ENCODE measurements at regions of chr1 and their contacts with region 1.

Region 1: DNA sequence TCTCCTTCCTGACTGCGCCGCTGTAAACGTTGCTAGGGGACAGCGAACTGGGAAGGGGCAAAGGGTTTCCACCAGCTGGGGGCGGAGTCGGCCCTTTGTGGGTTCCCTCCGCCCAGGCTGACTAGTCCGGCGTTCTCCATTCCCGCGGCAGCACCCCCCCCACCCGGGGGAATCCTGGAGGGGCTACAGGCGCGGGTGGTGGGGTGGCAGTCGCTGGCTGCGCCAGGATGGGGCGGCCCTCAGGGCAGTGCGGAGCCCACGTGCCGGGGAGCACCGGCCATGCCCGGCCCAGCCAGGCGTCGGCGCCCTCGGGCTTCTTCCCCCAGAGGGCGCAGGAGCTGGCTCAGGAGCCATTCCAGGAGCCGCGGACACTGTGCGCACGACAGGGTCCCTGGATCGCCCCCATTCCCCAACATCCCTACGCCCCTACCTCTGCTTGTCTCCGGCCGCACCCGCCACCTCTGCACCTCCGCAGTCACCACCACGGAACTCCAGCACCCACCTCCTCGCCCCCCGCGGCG is 476 bp downstream of the BATF3 start:
- DNase-seq: peak; percentile 82
- ATAC-seq: peak; percentile 68
- H3K4me3 Mint-ChIP-seq: peak overlapping the region; percentile 77
- H3K27ac Mint-ChIP-seq: peak overlapping the region; percentile 88
- H3K4me1 Mint-ChIP-seq: peaks cover 57% of the 10 kb centered on the region
- H3K27me3 Mint-ChIP-seq: peaks cover 5% of the 10 kb centered on the region

Region 2: DNA sequence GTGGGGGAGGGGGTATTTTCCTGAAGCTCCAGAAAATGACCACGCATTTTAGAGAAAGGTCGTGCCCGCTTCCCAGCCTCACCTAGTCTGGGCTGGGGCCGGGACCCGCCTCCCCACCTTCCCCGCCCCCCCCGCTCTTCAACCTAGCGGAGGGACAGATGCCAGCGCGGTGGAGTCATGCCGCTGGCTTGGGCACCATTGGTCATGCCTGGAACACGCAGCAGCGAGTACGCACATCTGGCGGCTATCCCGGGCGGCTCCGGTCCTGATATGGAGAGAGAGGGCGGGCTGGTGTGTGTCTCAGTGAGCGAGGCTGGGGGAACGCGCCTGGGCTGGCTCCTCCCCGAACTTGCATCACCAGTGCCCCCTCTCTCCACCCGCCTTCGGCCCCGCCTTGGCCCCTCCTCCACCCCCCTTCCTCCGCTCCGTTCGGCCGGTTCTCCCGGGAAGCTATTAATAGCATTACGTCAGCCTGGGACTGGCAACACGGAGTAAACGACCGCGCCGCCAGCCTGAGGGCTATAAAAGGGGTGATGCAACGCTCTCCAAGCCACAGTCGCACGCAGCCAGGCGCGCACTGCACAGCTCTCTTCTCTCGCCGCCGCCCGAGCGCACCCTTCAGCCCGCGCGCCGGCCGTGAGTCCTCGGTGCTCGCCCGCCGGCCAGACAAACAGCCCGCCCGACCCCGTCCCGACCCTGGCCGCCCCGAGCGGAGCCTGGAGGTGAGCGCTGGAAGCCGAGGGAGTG is 90.8 kb before region 1 on chr1 and contains the start of gene ATF3:
- CTCF ChIA-PET with region 1: no interaction called
- POLR2A ChIA-PET with region 1: interaction called, 3 read pairs
- intact Hi-C with region 1: loop called in 1 of 2 experiments (anchors 1 kb)
- DNase-seq: peak; percentile 97
- ATAC-seq: peak; percentile 89
- H3K4me3 Mint-ChIP-seq: peak within 1 kb of the TSS; percentile 91
- H3K27ac Mint-ChIP-seq: peak within 1 kb of the TSS; percentile 96
- H3K4me1 Mint-ChIP-seq: peaks cover 56% of the 10 kb centered on the region
- H3K27me3 Mint-ChIP-seq: peaks cover 45% of the 10 kb centered on the region
- total RNA-seq, gene ATF3: 40.3 to 44.9 TPM

Region 3: DNA sequence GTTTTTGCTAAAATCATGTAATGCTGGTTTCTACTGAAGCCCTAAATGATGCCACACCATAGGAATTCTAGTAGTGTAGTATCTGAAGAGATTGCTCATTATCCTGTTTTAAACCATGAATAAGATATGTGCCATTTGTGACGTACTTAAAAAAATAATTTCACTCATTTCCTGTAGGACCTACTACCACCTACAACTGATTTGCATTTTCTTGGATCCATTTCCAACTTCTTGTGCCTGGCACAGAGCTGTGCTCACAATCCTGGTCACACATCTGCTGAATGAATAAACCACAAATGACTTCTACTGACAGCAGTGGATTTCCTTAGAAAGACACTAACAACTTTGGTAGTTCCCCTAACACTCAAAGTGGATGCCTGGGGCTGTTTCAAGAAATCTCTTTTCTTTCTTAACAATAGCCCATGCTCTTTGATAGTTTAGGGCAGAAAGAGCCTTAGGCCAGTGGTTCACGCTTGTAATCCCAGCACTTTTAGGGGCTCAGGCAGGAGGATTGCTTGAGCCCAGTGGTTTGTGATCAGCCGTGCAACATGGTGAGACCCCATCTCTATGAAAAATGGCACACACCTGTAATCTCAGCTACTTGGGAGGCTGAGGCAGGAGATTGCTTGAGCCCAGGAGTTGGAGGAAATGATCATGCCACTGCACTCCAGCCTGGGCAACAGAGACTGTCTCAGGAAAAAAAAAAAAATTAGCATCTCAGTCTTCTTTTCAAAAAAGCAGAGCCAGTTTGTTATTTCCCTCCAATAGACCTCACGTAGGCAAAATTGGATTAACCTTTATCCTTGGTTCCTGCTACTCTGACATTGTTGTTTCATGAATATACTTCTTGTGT is 13.5 kb after region 1 on chr1:
- CTCF ChIA-PET with region 1: interaction called, 3 read pairs
- POLR2A ChIA-PET with region 1: interaction called, 3 read pairs
- intact Hi-C with region 1: loop called (anchors 1 kb)
- DNase-seq: peak; percentile 48
- ATAC-seq: peak; percentile 90
- H3K4me3 Mint-ChIP-seq: no peak overlapping the region
- H3K27ac Mint-ChIP-seq: peak overlapping the region; percentile 72
- H3K4me1 Mint-ChIP-seq: peaks cover 40% of the 10 kb centered on the region
- H3K27me3 Mint-ChIP-seq: peaks cover 2% of the 10 kb centered on the region

Region 4: DNA sequence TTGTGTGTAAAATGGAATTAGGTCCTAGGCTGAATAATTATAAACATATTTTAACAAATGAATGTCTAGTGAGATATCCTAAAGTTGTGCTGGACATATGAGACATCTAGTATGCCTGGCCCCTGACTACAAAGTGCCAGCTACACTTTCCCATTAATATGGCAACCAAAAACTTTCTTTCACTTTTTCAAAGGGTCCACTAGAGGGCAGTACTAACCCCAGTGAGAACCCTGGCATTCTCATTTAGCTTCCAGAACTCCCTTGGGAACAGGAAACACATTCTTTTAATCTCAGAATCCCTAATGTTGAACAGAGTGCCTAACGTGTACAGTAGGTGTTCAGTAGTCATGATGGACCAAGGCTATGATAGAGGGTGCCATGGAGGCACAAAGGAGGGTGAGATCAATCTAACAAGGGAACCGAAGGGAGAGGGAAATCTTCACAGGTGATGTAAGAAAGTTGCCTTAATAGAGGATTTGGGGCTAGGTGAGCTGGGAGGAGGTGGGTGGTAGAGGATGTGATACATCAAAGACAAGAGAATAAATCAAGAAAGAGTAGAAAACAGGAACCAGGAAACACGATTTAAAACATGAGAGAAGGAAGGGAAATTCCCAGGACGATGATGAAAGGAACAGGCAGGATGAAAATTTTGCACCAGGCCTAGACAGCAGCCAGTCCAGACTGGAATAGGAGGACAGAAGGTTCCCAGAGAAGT is 50.8 kb after region 1 on chr1:
- CTCF ChIA-PET with region 1: interaction called, 22 read pairs
- POLR2A ChIA-PET with region 1: no interaction called
- intact Hi-C with region 1: loop called (anchors 2 kb)
- DNase-seq: peak; percentile 27
- ATAC-seq: peak; percentile 30
- H3K4me3 Mint-ChIP-seq: peak overlapping the region; percentile 20
- H3K27ac Mint-ChIP-seq: peak overlapping the region; percentile 40
- H3K4me1 Mint-ChIP-seq: peaks cover 71% of the 10 kb centered on the region
- H3K27me3 Mint-ChIP-seq: no peaks in the 10 kb centered on the region

Region 5: GRCh38 chr1:212791676-212792395 is 92.7 kb after region 1 on chr1 and contains the starts of genes NSL1 and TATDN3:
- CTCF ChIA-PET with region 1: interaction called, 7 read pairs
- POLR2A ChIA-PET with region 1: no interaction called
- intact Hi-C with region 1: loop called in 1 of 2 experiments (anchors 1 kb)
- DNase-seq: peak; percentile 95
- ATAC-seq: peak; percentile 89
- H3K4me3 Mint-ChIP-seq: peak within 1 kb of the TSS; percentile 99
- H3K27ac Mint-ChIP-seq: peak within 1 kb of the TSS; percentile 94
- H3K4me1 Mint-ChIP-seq: peaks cover 43% of the 10 kb centered on the region
- H3K27me3 Mint-ChIP-seq: no peaks in the 10 kb centered on the region
- total RNA-seq, gene NSL1: 39.2 to 40.9 TPM
- total RNA-seq, gene TATDN3: 13.8 to 15.2 TPM

Region 6: DNA sequence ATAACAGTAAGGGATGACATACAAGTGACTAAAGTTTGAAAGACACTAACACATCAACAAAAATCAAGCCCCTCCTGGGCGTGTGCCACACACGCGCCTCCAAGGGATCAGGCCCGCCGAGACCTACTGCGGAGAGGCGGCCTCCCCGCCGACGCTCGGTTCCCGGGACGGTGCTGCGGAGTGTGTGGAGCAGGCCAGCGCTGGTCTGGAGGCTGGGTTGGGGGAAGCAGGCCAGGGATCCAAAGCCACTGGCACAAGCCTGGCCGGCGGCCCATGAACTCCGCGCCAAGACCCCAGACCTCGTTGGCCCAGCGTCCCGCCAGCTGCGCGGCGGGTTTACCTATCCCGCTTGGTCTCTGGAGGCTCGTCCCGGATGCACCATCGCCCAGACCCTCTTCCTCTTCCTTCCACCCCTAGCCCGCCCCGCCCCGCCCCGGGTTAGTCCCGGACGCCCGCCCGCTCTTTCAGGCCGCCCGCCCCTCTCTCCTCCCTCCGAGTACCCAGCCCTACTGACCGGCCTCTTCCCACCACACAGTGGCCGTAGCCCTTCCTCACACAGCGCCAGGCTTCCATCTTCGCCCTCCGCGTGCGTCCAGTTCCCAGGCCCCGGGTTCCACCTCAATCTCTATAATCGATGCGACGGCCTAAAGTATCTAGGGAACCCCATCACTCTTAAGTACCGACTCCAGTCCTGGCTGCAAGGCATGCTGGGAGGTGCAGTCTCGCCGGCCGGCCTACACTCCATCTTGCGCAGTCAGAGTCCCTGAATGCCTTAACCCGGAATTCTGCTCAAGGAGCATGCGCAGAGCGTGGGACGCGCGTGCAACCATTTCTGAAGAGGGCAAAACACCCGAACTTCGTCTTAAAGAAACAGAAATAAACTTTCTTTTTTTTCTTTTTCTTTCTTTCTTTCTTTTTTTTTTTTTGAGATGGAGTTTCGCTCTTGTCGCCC is 316.2 kb after region 1 on chr1 and contains the start of gene ANGEL2:
- CTCF ChIA-PET with region 1: no interaction called
- POLR2A ChIA-PET with region 1: no interaction called
- intact Hi-C with region 1: loop called in 1 of 2 experiments (anchors 5 kb)
- DNase-seq: peak; percentile 97
- ATAC-seq: peak; percentile 99
- H3K4me3 Mint-ChIP-seq: peak within 1 kb of the TSS; percentile 100
- H3K27ac Mint-ChIP-seq: peak within 1 kb of the TSS; percentile 100
- H3K4me1 Mint-ChIP-seq: peaks cover 30% of the 10 kb centered on the region
- H3K27me3 Mint-ChIP-seq: no peaks in the 10 kb centered on the region
- total RNA-seq, gene ANGEL2: 41.3 to 51.5 TPM